Thyroid gland (tissue), 4 donors: ENCODE measurements at regions of chr2 and their contacts with region 1.

Region 1: DNA sequence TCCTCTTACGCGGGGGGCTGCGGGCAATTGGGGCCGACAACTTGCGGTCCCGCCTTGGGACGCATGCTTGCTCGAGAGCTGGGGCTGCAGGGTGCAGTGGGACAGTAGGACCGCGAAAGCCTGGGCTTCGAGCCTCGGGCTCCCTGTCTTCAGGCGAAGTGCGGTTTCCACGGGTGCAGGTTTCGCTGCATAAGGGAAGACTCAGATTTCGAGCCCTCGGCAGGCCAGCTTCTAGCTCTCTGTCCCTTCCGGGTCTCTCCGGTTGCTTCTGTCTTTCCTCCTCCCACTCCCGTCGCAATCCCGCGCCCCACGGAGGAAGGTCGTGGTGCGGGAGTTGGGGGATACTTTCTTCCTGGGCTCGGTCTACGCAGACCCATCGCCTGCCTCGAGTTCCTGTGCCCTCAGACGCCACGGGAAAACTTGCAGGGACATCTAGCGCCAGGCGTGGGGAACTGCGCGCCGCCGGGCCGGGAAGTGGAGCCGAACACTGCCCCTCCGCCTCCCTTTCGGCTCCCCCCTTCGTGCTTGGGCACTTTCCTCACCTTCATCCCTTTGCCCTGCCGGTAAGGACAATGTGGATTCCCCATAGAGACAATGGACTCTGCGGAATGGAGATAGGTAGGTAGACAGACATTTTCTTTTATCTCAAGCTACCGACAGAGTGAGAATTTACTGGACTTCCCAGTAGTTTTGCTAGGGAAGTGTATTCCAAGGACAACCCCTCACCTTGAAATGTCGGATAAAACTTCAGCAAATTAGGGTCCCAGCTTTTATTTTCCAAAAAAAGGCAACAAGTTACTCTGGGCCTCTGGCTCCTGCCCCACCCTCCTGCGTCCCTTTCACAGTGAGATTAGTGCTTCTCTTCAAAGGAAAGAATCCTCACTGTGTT is 4.2 kb upstream of the HOXD13 start:
- DNase-seq: peak; percentile 31 to 48
- H3K4me3 ChIP-seq: no peak overlapping the region
- H3K27ac ChIP-seq: no peak overlapping the region
- H3K4me1 ChIP-seq: peaks cover 4 to 22% of the 10 kb centered on the region in 2 donors
- H3K27me3 ChIP-seq: peaks cover 87% of the 10 kb centered on the region
- CTCF ChIP-seq: peak in 5 of 6 experiments; percentile 24 to 79 (median 46)
- POLR2A ChIP-seq: no peak

Region 2: GRCh38 chr2:175366815-175367214 is 721.5 kb before region 1 on chr2:
- intact Hi-C with region 1: loop called (anchors 10 kb)
- DNase-seq: peak in 1 of 2 donors; percentile 4
- H3K4me3 ChIP-seq: no peak overlapping the region
- H3K27ac ChIP-seq: no peak overlapping the region
- H3K4me1 ChIP-seq: no peaks in the 10 kb centered on the region
- H3K27me3 ChIP-seq: no peaks in the 10 kb centered on the region
- CTCF ChIP-seq: peak in 5 of 6 experiments; percentile 20 to 71 (median 59)
- POLR2A ChIP-seq: no peak